Esophagus muscularis mucosa (tissue), 4 donors: ENCODE measurements at regions of chr5 and their contacts with region 1.

Region 1: DNA sequence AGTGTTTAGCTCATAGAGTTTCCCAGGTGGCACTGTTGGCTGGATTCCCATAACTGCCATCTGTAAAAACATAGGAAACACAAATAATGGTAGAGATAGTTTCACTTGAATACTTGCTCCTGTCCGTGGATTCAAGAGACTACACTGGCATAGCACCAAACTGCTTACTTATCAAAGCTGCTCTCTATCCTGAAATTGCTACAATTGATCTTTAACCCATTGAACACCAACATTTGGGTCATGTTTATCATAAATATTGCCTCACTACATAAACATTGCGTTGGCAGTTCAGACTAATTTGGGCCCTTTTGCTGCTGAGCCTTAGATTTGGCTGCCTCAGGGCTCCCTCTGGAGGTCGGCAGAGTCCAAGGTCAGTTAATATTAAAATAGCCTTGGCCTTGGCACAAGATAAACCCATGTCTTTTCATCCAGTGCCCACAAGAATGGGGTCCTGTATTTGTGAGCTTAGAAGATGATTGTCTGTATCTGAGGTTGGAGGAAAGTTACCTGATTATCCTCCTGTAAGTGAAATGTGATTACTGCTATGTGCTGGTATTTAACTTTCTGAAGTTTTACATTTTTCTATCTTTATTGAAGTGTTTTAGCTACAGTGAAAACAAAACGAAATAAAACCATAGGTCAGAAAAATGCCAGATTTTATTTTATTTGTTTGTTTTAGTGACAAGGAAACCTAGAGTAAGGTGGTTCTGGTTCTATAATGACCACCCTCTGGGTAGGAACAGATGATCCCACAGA is 4.0 kb upstream of the RANBP3L start:
- DNase-seq: no peak
- H3K4me3 ChIP-seq: no peak overlapping the region
- H3K27ac ChIP-seq: peak overlapping the region in 1 of 4 donors; percentile 11
- H3K4me1 ChIP-seq: peaks cover 15 to 44% (median 27%) of the 10 kb centered on the region in 4 donors
- H3K27me3 ChIP-seq: no peaks in the 10 kb centered on the region
- CTCF ChIP-seq: peak; percentile 67 to 80 (median 77)
- EP300 ChIP-seq: no peak
- POLR2A ChIP-seq: no peak

Region 2: GRCh38 chr5:36177715-36178523 is 127.8 kb before region 1 on chr5:
- intact Hi-C with region 1: loop called (anchors 5 kb)
- DNase-seq: no peak
- H3K4me3 ChIP-seq: no peak overlapping the region
- H3K27ac ChIP-seq: no peak overlapping the region
- H3K4me1 ChIP-seq: peaks cover 0 to 11% (median 0%) of the 10 kb centered on the region in 4 donors
- H3K27me3 ChIP-seq: no peaks in the 10 kb centered on the region
- CTCF ChIP-seq: peak; percentile 62 to 73 (median 65)
- EP300 ChIP-seq: no peak
- POLR2A ChIP-seq: no peak

Region 3: GRCh38 chr5:36241631-36242533 is 63.9 kb before region 1 on chr5 and contains the start of gene NADK2:
- intact Hi-C with region 1: loop called (anchors 10 kb)
- DNase-seq: peak; percentile 99
- H3K4me3 ChIP-seq: peak within 1 kb of the TSS; percentile 90 to 99 (median 95)
- H3K27ac ChIP-seq: peak within 1 kb of the TSS; percentile 97 to 99 (median 99)
- H3K4me1 ChIP-seq: peaks cover 40 to 49% (median 46%) of the 10 kb centered on the region in 4 donors
- H3K27me3 ChIP-seq: no peaks in the 10 kb centered on the region
- CTCF ChIP-seq: peak; percentile 59 to 73 (median 64)
- EP300 ChIP-seq: peak; percentile 13
- POLR2A ChIP-seq: peak; percentile 72
- total RNA-seq, gene NADK2: 44.6 to 74.8 (median 59.5) TPM

Region 4: DNA sequence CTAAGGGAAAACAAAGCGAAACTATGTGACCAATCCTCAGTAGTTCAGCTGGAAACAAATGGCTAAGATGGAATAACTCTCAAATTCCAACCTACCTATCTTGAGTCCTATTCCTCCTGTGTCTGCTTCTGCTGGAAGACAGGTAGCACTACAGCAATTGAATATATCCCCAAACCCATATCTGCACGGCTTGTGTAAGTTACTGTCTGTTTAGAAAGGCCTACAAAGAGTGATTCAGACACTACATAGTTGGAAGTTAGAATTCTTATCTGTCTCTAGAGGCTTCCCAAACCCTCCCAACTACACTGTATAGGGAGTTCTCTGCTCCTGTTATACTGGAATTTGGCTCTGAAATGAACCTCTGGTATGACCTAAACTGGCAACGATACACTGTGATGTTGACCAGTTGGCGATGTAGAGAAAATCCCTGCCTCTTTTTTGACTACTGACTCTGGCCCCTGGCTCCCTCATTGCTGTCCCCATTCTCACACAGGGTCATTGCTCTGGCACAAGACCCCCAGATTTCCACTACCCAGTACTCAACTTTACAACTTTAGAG is 41.5 kb before region 1 on chr5:
- intact Hi-C with region 1: loop called (anchors 2 kb)
- DNase-seq: no peak
- H3K4me3 ChIP-seq: no peak overlapping the region
- H3K27ac ChIP-seq: no peak overlapping the region
- H3K4me1 ChIP-seq: no peaks in the 10 kb centered on the region
- H3K27me3 ChIP-seq: no peaks in the 10 kb centered on the region
- CTCF ChIP-seq: no peak
- EP300 ChIP-seq: no peak
- POLR2A ChIP-seq: no peak